ENCODE measurements at regions of chr1 and their contacts with region 1.

Region 1: GRCh38 chr1:197775282-197776262 is at the start of gene DENND1B:
- DNase-seq: peak; percentile 93
- H3K4me3 Mint-ChIP-seq: peak within 1 kb of the TSS; percentile 72
- H3K27ac Mint-ChIP-seq: peak within 1 kb of the TSS; percentile 93
- H3K4me1 Mint-ChIP-seq: peaks cover 44% of the 10 kb centered on the region
- H3K27me3 Mint-ChIP-seq: no peaks in the 10 kb centered on the region
- CTCF ChIP-seq: no peak
- total RNA-seq, gene DENND1B: 26.7 and 28.2 TPM in 2 replicates

Region 2: GRCh38 chr1:197553281-197553680 is 222.3 kb before region 1 on chr1:
- CTCF ChIA-PET with region 1: no interaction called
- intact Hi-C with region 1: no loop called
- DNase-seq: no peak
- H3K4me3 Mint-ChIP-seq: no peak overlapping the region
- H3K27ac Mint-ChIP-seq: no peak overlapping the region
- H3K4me1 Mint-ChIP-seq: no peaks in the 10 kb centered on the region
- H3K27me3 Mint-ChIP-seq: no peaks in the 10 kb centered on the region
- CTCF ChIP-seq: no peak

Region 3: DNA sequence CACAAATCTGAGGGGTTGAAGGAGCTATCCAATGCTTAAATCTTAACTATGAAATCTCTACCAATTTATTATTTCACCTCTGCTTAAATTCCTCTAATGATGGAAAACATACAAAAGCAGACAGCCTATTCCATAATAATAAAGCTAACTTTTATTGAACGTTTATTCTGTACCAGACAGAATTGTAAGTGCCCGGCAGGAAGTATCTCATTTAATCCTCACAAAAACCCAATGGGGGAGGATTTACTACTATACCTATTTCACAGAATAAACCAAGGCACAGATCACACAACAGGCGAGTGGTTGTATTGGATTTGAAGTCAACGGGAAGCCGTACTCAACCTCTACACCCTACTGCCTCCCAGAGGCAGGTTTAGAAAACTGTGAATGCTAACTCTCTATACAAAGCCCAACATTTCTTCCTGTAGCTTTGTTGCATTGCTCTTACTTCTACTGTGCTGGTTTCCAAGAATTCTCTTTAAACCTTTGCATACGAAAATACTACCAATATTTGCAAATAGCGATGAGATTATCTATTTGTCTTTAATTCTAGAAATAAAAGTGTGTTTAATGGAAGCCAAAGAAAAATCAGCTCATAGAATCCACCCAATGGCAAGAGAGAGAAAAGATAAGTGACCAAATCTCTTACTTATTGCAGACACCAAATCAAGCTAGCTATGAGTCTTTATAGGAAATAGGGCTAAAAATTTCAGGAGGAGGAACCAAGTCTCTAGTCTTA is 93.3 kb after region 1 on chr1:
- CTCF ChIA-PET with region 1: interaction called, 5 read pairs
- intact Hi-C with region 1: loop called (anchors 2 kb)
- DNase-seq: peak; percentile 62
- H3K4me3 Mint-ChIP-seq: no peak overlapping the region
- H3K27ac Mint-ChIP-seq: no peak overlapping the region
- H3K4me1 Mint-ChIP-seq: peaks cover 1% of the 10 kb centered on the region
- H3K27me3 Mint-ChIP-seq: no peaks in the 10 kb centered on the region
- CTCF ChIP-seq: peak; percentile 68

Region 4: DNA sequence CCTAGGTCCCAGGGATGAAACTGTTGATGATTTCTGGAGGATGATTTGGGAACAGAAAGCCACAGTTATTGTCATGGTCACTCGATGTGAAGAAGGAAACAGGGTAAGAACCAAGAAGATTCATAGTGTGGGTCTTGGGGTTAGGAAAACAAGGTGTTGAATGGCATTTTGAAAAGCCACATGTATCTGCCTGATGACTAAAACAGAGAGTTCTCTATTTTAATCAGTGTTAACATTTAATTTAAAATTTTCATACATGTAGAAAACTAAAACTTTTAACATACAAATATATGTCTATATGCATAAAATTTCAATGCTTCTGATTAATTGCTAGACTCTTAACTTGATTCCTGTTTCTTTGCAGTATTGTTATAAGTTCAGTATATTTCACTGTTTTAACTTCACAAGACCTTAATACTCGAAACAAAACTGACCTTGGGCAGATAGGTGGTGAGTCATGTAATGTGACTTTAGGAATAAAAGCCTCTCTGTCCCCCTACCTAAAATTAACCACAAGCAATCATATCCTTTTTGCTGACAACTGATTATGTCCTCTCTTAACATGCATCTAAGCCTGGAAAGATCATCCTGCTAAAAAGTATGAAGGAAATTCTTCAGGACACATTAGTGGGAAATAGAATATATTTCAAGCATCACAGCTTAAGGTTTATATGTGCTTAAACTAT is 958.9 kb after region 1 on chr1:
- CTCF ChIA-PET with region 1: no interaction called
- intact Hi-C with region 1: no loop called
- DNase-seq: no peak
- H3K4me3 Mint-ChIP-seq: no peak overlapping the region
- H3K27ac Mint-ChIP-seq: peak overlapping the region; percentile 12
- H3K4me1 Mint-ChIP-seq: peaks cover 10% of the 10 kb centered on the region
- H3K27me3 Mint-ChIP-seq: no peaks in the 10 kb centered on the region
- CTCF ChIP-seq: no peak